OCI-LY7 (cell line): ENCODE measurements at regions of chr7 and their contacts with region 1.

Region 1: GRCh38 chr7:35906191-35906908 is 105.5 kb downstream of the SEPTIN7 start:
- DNase-seq: peak; percentile 82
- H3K4me3 ChIP-seq: no peak overlapping the region
- H3K27ac ChIP-seq: no peak overlapping the region
- H3K4me1 ChIP-seq: peaks cover 3% of the 10 kb centered on the region
- CTCF ChIP-seq: peak; percentile 97

Region 2: GRCh38 chr7:35555934-35556333 is 350.4 kb before region 1 on chr7:
- CTCF ChIA-PET with region 1: no interaction called
- POLR2A ChIA-PET with region 1: no interaction called
- intact Hi-C with region 1: loop called (anchors 10 kb)
- DNase-seq: no peak
- H3K4me3 ChIP-seq: no peak overlapping the region
- H3K27ac ChIP-seq: no peak overlapping the region
- H3K4me1 ChIP-seq: no peaks in the 10 kb centered on the region
- CTCF ChIP-seq: no peak

Region 3: GRCh38 chr7:35624299-35625186 is 281.8 kb before region 1 on chr7:
- CTCF ChIA-PET with region 1: interaction called, 4 read pairs
- POLR2A ChIA-PET with region 1: interaction called, 3 read pairs
- intact Hi-C with region 1: loop called (anchors 5 kb)
- DNase-seq: peak; percentile 62
- H3K4me3 ChIP-seq: no peak overlapping the region
- H3K27ac ChIP-seq: no peak overlapping the region
- H3K4me1 ChIP-seq: no peaks in the 10 kb centered on the region
- CTCF ChIP-seq: peak; percentile 93

Region 4: DNA sequence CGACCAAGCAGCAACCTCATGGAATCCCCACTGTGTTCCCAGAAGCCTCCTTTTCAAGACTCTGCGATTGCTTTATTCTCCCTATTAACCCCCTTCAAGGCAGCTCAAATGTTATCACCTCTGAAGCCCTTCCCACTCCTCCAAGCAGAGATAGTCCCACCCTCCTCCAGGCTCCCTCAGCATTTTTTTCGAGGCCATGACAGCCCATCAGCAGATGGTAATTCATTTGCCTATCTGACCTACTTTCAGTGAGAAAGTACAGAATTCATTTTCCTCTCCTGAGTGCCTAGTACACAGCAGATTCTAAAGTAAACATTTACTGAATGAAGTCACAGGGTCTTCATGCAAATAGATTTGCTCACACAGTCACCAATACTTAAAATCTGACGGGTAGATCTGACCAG is 259.2 kb before region 1 on chr7:
- CTCF ChIA-PET with region 1: no interaction called
- POLR2A ChIA-PET with region 1: no interaction called
- intact Hi-C with region 1: no loop called
- DNase-seq: no peak
- H3K4me3 ChIP-seq: no peak overlapping the region
- H3K27ac ChIP-seq: no peak overlapping the region
- H3K4me1 ChIP-seq: peaks cover 3% of the 10 kb centered on the region
- CTCF ChIP-seq: no peak

Region 5: DNA sequence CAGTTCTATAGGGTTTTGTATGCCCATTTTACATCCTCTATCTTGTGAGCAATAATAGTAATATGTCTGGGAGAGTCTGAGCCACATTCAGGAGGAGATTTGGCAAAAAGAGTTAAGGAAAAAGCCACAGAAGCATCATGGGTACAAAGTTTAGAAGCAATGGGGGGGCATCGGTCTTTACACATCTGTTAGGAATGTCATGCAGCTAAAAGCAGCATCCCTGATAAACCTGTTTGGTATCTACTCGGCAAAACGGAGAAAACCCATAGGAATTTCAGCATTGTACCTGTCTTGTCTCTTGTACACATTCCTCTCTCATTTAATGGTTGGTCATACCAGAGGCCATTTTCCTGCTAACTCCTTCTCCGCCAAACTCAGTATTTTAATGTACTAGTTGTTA is 198.9 kb before region 1 on chr7:
- CTCF ChIA-PET with region 1: interaction called, 7 read pairs
- POLR2A ChIA-PET with region 1: interaction called, 8 read pairs
- intact Hi-C with region 1: loop called (anchors 1 kb)
- DNase-seq: no peak
- H3K4me3 ChIP-seq: no peak overlapping the region
- H3K27ac ChIP-seq: no peak overlapping the region
- H3K4me1 ChIP-seq: peaks cover 21% of the 10 kb centered on the region
- CTCF ChIP-seq: no peak